Spleen (tissue), 13 donors: ENCODE measurements at regions of chr12 and their contacts with region 1.

Region 1: GRCh38 chr12:92561543-92561899 is 141.3 kb upstream of the PLEKHG7 start:
- DNase-seq: no peak
- H3K4me3 ChIP-seq: no peak overlapping the region
- H3K27ac ChIP-seq: peak overlapping the region in 6 of 8 donors; percentile 1 to 49 (median 36)
- H3K4me1 ChIP-seq: peaks cover 0 to 45% (median 19%) of the 10 kb centered on the region in 6 donors
- H3K27me3 ChIP-seq: no peaks in the 10 kb centered on the region
- CTCF ChIP-seq: no peak
- POLR2A ChIP-seq: no peak

Region 2: DNA sequence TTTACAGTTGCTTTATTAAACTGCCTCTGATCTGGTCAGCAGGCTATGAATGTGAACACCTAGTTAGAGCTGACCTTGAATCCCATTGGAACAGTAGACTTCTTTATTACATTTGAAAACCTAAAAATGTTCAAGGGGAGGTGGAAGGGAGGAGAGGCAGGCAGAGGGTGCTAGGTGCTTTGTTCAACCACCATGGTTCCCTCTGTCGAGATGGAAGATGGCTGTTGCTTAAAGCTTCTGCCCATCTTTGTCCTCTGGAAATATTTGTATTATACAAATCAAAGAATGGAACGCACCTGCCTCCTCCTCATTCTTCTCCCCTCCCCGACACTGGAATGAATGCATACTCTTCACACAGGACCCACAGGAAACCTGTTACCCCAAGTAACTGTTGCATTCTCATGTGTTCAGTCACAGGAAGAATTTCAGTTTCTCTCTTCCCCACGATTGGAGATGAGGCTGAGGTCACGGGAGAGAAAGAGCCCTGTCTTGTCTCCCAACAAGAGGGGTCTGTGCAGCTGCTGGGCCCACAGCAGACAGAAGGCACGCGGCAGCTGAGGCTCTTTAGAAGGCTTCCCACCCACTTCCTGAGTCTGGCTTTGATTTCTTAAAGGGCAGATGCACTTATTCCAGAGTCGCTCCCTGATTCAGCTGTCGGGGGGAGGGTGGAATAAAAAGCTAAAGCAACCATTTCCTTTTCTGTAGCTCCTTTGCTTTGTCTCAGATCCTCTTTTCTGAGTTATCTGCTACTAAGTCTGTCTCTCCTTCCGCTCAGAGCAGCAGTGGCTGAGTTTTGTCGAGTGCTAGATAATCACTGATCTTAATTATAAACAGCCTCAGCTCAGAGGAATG is 198.0 kb before region 1 on chr12:
- intact Hi-C with region 1: loop called (anchors 10 kb)
- DNase-seq: peak; percentile 81
- H3K4me3 ChIP-seq: peak overlapping the region; percentile 19 to 67 (median 26)
- H3K27ac ChIP-seq: peak overlapping the region; percentile 74 to 90 (median 86)
- H3K4me1 ChIP-seq: peaks cover 23 to 61% (median 53%) of the 10 kb centered on the region in 6 donors
- H3K27me3 ChIP-seq: no peaks in the 10 kb centered on the region
- CTCF ChIP-seq: no peak
- POLR2A ChIP-seq: peak in 2 of 3 donors; percentile 6 to 44

Region 3: GRCh38 chr12:92432724-92433441 is 128.6 kb before region 1 on chr12:
- intact Hi-C with region 1: no loop called
- DNase-seq: no peak
- H3K4me3 ChIP-seq: no peak overlapping the region
- H3K27ac ChIP-seq: peak overlapping the region in 6 of 8 donors; percentile 11 to 73 (median 65)
- H3K4me1 ChIP-seq: peaks cover 5 to 37% (median 16%) of the 10 kb centered on the region in 6 donors
- H3K27me3 ChIP-seq: no peaks in the 10 kb centered on the region
- CTCF ChIP-seq: no peak
- POLR2A ChIP-seq: no peak

Region 4: DNA sequence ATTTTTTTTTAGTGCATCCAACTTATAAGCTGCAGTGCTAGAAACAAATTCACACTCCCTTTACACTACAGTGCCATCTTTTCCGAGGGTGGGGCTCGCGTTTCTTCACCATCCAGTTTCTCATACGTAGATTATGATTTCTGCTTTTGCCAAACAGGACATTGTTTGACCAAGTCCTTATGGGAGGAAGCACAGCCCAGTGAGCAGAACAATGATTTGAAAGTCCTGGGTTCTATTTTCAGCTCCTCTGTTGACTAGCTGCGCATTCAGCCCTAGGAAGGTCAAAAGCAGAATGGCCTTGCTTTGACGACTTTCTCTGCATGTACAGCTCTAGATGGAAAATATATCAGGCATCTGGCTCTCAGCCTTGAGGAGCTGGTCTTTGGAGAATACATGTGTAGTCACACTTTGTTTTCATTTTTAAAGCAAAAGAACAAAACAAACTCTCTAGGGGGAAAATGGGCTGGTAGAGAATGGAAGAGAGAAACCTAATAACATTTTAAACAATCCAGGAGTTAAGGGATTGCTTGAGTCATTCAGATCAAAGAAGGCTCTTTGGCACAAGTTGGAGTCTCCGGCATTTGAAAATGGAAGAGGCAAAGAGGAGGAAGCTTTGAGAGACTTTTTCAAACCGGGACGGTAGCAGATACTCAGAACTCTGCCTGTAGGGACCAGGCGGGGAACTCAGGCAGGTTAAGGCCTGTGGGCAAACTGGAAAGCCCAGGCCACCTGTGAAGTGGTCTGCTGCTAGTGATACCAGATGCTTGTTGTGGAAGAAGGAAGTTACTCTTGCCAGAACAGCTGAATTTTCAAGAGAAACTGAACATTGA is 116.1 kb before region 1 on chr12:
- intact Hi-C with region 1: loop called (anchors 10 kb)
- DNase-seq: peak; percentile 84
- H3K4me3 ChIP-seq: no peak overlapping the region
- H3K27ac ChIP-seq: peak overlapping the region; percentile 78 to 95 (median 87)
- H3K4me1 ChIP-seq: peaks cover 26 to 69% (median 50%) of the 10 kb centered on the region in 6 donors
- H3K27me3 ChIP-seq: no peaks in the 10 kb centered on the region
- CTCF ChIP-seq: no peak
- POLR2A ChIP-seq: no peak